Posterior vena cava (tissue), 2 donors: ENCODE measurements at regions of chr5 and their contacts with region 1.

Region 1: DNA sequence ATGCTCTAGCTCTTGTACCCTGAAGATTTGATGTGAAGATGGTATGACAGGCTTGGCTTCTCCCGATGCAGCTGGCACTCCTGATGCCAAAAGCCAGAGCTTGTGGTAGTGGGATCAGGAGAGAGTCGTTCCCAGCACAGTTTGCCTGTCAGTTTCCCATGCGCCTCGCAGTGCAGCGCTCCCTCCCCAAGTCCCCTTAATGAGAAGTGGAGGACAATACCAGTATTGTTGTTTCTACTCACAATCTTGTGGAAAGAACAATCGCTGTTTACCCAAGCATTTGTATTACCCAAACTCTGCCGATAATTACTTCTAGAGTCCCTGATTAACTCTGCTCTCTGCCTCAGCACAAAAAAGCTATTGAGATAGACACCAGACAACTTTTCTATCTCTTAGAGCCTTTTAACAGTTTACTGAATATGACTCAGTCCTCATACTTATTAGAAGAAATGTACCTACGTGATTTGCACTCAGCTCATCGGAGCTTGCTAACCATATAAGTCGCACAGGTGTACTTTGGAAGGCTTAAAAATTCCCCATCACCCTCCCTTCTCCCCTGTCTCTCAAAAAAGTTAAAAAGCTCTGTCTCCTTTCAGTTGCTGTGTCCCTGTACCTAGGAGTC is 283.2 kb upstream of the TMEM161B start:
- DNase-seq: no peak

Region 2: GRCh38 chr5:88298425-88298824 is 253.4 kb before region 1 on chr5:
- intact Hi-C with region 1: no loop called
- DNase-seq: no peak

Region 3: DNA sequence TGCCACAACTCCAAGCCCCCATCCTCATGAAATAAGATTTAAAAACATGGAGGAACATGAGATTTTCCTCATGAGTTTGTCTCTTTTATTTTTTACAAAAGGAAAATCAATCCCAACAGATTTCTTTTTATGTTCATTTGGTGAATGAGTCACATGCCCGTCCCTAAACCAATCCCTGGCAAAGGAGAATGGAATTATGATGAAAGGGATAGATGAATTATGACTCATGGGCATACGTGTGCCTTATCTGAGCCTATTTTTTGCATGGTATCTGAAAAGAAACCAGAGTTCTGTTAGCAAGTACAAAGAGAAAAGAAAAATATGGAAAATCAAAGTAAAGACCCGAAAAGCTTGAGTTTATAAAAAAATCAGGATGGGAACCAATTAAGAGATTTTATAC is 15.7 kb before region 1 on chr5:
- intact Hi-C with region 1: loop called in 1 of 2 experiments (anchors 1 kb)
- DNase-seq: no peak

Region 4: GRCh38 chr5:88594441-88594840 is 42.6 kb after region 1 on chr5:
- intact Hi-C with region 1: no loop called
- DNase-seq: no peak

Region 5: GRCh38 chr5:88892669-88893068 is 340.8 kb after region 1 on chr5:
- intact Hi-C with region 1: no loop called
- DNase-seq: no peak